Posterior cingulate gyrus (tissue), 11 donors: ENCODE measurements at regions of chr12 and their contacts with region 1.

Region 1: GRCh38 chr12:6873094-6874014 is at the start of gene SPSB2:
- DNase-seq: peak; percentile 88 to 99 (median 94)

Region 2: DNA sequence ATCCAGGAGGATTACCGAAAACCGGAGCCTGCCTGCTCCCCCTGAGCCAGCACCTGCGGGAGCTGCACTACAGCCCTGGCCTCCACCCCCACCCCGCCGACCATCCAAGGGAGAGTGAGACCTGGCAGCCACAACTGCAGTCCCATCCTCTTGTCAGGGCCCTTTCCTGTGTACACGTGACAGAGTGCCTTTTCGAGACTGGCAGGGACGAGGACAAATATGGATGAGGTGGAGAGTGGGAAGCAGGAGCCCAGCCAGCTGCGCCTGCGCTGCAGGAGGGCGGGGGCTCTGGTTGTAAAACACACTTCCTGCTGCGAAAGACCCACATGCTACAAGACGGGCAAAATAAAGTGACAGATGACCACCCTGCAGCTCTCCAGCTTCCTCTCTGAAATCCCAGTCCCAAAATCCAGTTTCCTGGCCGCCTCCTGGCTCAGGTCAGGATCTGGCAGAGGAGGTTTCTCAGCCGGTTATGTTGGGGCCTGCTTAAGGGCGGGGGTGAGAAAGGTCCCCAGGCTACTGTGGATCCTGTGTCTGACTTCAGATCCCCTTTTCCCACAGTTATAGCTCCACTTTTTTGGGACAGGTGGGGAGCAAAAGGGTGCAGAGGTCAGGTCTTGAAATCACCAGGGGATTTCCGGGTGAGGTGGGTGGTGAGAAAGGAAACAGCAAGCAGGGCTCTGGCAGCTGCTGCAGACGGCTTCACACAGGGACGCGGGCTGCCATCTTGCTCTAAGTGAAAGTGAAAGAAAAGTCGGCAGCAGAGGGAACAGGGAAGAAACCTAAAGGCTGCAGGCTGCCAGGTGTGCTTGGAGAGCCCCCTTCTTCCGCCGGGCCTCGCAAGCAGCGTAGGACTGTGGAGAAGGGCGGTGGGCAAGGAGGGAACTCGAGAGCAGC is 421.8 kb before region 1 on chr12 and contains the start of gene TAPBPL:
- intact Hi-C with region 1: no loop called
- DNase-seq: peak; percentile 78 to 98 (median 88)

Region 3: GRCh38 chr12:6890789-6891645 is 17.7 kb after region 1 on chr12:
- intact Hi-C with region 1: loop called (anchors 1 kb)
- DNase-seq: peak; percentile 96 to 100 (median 98)